ENCODE measurements at regions of chr12 and their contacts with region 1.

Region 1: GRCh38 chr12:124917135-124917840 is 2.8 kb upstream of the UBC start:
- DNase-seq: peak; percentile 99
- H3K4me3 ChIP-seq: peak overlapping the region; percentile 82 to 96 (median 90)
- H3K27ac ChIP-seq: peak overlapping the region; percentile 99 to 100 (median 100)
- H3K4me1 ChIP-seq: peaks cover 45 to 76% (median 68%) of the 10 kb centered on the region in 4 donors
- H3K27me3 ChIP-seq: peaks cover 0 to 5% (median 0%) of the 10 kb centered on the region in 4 donors
- CTCF ChIP-seq: no peak
- EP300 ChIP-seq: peak; percentile 61
- POLR2A ChIP-seq: peak; percentile 68

Region 2: DNA sequence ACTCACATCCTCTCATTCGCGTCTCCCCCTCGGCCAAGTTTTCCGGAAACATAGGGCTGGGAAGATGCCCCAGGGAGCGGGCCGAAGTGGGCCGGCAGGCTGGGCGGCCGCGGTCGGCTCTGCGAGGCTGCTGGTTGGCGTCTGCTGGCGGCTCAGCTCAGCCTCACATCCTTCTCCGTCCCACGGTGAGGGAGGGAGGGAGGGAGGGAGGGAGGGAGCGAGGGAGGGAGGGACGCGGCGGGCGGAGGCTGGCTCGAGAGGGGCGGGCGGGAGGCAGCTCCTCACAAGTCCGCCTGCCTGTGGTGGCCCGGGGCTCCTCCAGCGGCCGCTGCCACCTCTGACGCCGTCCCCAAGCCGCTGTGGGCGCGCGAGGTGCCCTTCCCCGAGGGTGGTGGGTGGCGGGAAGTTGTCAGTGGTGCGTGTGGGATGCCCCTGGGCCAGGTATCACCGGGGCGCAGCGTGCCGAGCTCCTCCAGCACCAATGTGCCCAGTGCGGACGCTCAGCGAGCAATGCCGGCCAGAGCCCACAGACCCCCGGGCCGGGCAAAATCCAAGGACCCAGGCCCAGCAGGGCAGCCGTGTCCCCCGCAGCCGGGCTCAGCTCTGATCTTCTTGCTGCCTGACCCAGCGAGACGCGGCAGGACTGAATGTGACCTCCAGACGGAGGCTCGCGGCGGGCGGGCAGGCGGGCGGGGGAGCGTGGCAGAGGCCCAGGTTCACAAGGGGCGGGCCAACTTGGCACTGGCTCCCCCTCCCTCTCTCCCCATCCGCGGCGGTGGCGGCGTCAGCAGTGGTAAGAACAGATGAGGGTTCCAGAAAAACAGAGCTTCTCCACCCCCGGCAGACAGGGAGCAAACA is 528.4 kb before region 1 on chr12:
- intact Hi-C with region 1: loop called (anchors 10 kb)
- DNase-seq: peak; percentile 97
- H3K4me3 ChIP-seq: peak overlapping the region; percentile 59 to 71 (median 62)
- H3K27ac ChIP-seq: peak overlapping the region; percentile 95 to 98 (median 96)
- H3K4me1 ChIP-seq: peaks cover 90 to 100% (median 99%) of the 10 kb centered on the region in 4 donors
- H3K27me3 ChIP-seq: peaks cover 0 to 2% (median 0%) of the 10 kb centered on the region in 4 donors
- CTCF ChIP-seq: no peak
- EP300 ChIP-seq: no peak
- POLR2A ChIP-seq: peak; percentile 32

Region 3: DNA sequence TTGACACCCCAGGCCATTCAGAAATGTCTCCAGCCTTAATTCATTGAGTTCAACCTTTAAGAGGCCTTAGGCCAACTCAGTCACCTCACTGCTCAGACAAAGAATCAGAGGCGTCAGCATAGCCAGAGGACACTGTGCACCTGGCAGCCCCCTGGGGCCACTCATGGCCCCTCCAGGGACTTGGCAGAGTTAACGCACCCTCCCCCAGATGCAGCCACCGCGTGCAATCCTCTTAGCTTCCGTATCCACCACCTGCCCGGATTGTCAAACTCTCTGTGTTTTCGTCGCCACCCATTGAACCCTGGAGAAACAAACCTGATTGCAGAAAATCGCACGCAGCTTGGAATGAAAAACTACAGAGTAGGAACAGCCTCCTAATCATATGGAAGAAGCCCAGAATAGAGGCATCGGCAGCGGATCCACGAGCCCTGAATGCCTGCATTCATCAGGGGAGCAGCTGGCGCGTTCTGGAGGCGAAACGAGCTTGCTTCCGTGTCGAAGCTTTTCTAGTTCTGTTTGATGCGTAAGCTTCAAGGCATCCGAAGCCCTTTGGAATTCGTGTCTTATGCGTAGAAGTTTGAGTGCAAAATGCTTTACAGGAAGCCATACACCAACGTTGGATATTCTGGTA is 98.5 kb after region 1 on chr12:
- intact Hi-C with region 1: no loop called
- DNase-seq: no peak
- H3K4me3 ChIP-seq: no peak overlapping the region
- H3K27ac ChIP-seq: no peak overlapping the region
- H3K4me1 ChIP-seq: no peaks in the 10 kb centered on the region
- H3K27me3 ChIP-seq: no peaks in the 10 kb centered on the region
- CTCF ChIP-seq: no peak
- EP300 ChIP-seq: no peak
- POLR2A ChIP-seq: no peak